ENCODE measurements at regions of chr16 and their contacts with region 1.

Region 1: GRCh38 chr16:30534368-30535105 is at the start of gene ZNF747:
- DNase-seq: peak; percentile 89 to 92 (median 90)
- H3K4me3 ChIP-seq: peak within 1 kb of the TSS; percentile 86 to 92
- H3K4me3 Mint-ChIP-seq: peak within 1 kb of the TSS; percentile 87 to 99 (median 93)
- H3K27ac ChIP-seq: peak within 1 kb of the TSS; percentile 91
- H3K27ac Mint-ChIP-seq: peak within 1 kb of the TSS; percentile 94 to 99 (median 97)
- H3K4me1 ChIP-seq: peaks cover 42% of the 10 kb centered on the region
- H3K4me1 Mint-ChIP-seq: peaks cover 15 to 51% (median 31%) of the 10 kb centered on the region in 4 donors
- H3K27me3 ChIP-seq: no peaks in the 10 kb centered on the region
- H3K27me3 Mint-ChIP-seq: no peaks in the 10 kb centered on the region
- total RNA-seq, gene ZNF747: 15.7 to 17.8 TPM

Region 2: DNA sequence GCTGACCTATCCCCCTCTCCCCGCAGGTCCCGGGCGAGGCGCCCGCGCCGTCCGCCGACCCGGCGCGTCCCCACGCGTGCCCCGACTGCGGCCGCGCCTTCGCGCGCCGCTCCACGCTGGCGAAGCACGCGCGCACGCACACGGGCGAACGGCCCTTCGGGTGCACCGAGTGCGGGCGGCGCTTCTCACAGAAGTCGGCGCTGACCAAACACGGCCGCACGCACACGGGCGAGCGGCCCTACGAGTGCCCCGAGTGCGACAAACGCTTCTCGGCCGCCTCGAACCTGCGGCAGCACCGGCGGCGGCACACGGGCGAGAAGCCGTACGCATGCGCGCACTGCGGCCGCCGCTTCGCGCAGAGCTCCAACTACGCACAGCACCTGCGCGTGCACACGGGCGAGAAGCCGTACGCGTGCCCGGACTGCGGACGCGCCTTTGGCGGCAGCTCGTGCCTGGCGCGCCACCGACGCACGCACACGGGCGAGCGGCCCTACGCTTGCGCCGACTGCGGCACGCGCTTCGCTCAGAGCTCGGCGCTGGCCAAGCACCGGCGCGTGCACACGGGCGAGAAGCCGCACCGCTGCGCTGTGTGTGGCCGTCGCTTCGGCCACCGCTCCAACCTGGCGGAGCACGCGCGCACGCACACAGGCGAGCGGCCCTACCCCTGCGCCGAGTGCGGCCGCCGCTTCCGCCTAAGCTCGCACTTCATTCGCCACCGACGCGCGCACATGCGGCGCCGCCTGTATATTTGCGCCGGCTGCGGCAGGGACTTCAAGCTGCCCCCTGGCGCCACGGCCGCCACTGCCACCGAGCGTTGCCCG is 116.8 kb before region 1 on chr16:
- CTCF ChIA-PET with region 1: no interaction called
- POLR2A ChIA-PET with region 1: interaction called, 25 read pairs
- intact Hi-C with region 1: no loop called
- DNase-seq: peak; percentile 89 to 93 (median 91)
- H3K4me3 ChIP-seq: peak overlapping the region; percentile 12 to 68
- H3K4me3 Mint-ChIP-seq: peak overlapping the region; percentile 39 to 85 (median 68)
- H3K27ac ChIP-seq: peak overlapping the region; percentile 61
- H3K27ac Mint-ChIP-seq: peak overlapping the region in 3 of 7 donors; percentile 41 to 90 (median 74)
- H3K4me1 ChIP-seq: peaks cover 15% of the 10 kb centered on the region
- H3K4me1 Mint-ChIP-seq: peaks cover 6 to 24% (median 13%) of the 10 kb centered on the region in 4 donors
- H3K27me3 ChIP-seq: no peaks in the 10 kb centered on the region
- H3K27me3 Mint-ChIP-seq: no peaks in the 10 kb centered on the region

Region 3: DNA sequence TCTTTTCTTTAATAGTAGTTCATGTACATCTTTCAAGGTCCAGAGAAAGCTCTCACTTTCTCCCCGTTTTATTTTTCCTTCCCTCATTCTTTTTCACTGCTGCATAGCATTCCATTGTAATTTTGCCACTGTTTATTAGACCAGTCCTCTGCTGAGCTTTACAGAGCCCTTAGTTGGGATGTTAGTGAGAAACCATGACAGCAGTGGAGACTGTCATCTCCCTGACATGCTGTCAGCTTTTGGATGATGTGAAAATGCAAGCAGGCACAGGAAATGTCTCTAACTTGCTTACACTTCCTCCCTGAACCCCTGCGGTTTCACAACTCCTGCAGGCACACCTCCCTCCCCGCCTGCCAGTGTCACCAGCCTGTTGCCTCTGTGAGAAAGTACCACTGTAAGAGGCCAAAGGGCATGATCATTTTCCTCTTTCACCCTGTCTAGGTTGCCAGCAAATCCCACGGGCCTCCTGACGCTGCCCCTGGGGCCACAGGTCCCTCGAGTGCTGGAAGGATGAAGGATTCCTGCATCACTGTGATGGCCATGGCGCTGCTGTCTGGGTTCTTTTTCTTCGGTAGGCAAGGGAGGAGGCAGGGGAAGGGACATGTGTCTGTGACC is 62.1 kb before region 1 on chr16 and contains the start of gene ITGAL:
- CTCF ChIA-PET with region 1: interaction called, 9 read pairs
- POLR2A ChIA-PET with region 1: interaction called, 21 read pairs
- intact Hi-C with region 1: loop called (anchors 10 kb)
- DNase-seq: peak; percentile 87 to 97 (median 89)
- H3K4me3 ChIP-seq: peak within 1 kb of the TSS; percentile 77 to 96
- H3K4me3 Mint-ChIP-seq: peak within 1 kb of the TSS; percentile 98 to 99 (median 98)
- H3K27ac ChIP-seq: peak within 1 kb of the TSS; percentile 89
- H3K27ac Mint-ChIP-seq: peak within 1 kb of the TSS; percentile 93 to 97 (median 95)
- H3K4me1 ChIP-seq: peaks cover 67% of the 10 kb centered on the region
- H3K4me1 Mint-ChIP-seq: peaks cover 33 to 75% (median 45%) of the 10 kb centered on the region in 4 donors
- H3K27me3 ChIP-seq: no peaks in the 10 kb centered on the region
- H3K27me3 Mint-ChIP-seq: no peaks in the 10 kb centered on the region
- total RNA-seq, gene ITGAL: 648 to 657 TPM

Region 4: DNA sequence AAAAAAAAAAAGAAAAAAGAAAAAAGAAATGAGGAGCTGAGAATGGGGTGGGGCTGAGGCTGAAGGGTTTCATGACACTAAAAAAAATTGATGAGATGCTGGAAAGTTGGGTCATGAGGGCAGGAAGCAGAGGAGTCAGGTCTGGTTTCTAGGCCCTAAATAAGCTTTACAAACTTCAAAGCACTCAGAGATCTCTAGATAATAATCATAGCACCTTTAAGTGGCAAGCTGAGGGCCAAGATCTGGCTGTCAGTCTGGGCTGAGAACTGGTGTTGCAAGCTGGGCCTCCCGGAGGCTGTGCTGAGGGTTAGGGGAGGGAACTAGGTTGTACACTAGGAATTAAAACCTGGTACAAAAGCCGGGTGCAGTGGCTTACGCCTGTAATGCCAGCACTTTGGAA is 17.2 kb after region 1 on chr16:
- CTCF ChIA-PET with region 1: interaction called, 101 read pairs
- POLR2A ChIA-PET with region 1: interaction called, 457 read pairs
- intact Hi-C with region 1: no loop called
- DNase-seq: peak; percentile 80 to 91 (median 88)
- H3K4me3 ChIP-seq: peak overlapping the region in 1 of 2 donors; percentile 13
- H3K4me3 Mint-ChIP-seq: peak overlapping the region; percentile 76 to 85 (median 80)
- H3K27ac ChIP-seq: peak overlapping the region; percentile 60
- H3K27ac Mint-ChIP-seq: peak overlapping the region; percentile 94 to 98 (median 96)
- H3K4me1 ChIP-seq: peaks cover 66% of the 10 kb centered on the region
- H3K4me1 Mint-ChIP-seq: peaks cover 32 to 63% (median 49%) of the 10 kb centered on the region in 4 donors
- H3K27me3 ChIP-seq: no peaks in the 10 kb centered on the region
- H3K27me3 Mint-ChIP-seq: no peaks in the 10 kb centered on the region

Region 5: GRCh38 chr16:30585400-30586189 is 51.1 kb after region 1 on chr16 and contains the start of gene ZNF785:
- CTCF ChIA-PET with region 1: interaction called, 5 read pairs
- POLR2A ChIA-PET with region 1: interaction called, 31 read pairs
- intact Hi-C with region 1: no loop called
- DNase-seq: peak; percentile 94 to 96 (median 95)
- H3K4me3 ChIP-seq: peak within 1 kb of the TSS; percentile 73 to 97
- H3K4me3 Mint-ChIP-seq: peak within 1 kb of the TSS; percentile 87 to 96 (median 91)
- H3K27ac ChIP-seq: peak within 1 kb of the TSS; percentile 79
- H3K27ac Mint-ChIP-seq: peak within 1 kb of the TSS; percentile 76 to 96 (median 93)
- H3K4me1 ChIP-seq: peaks cover 21% of the 10 kb centered on the region
- H3K4me1 Mint-ChIP-seq: peaks cover 9 to 38% (median 26%) of the 10 kb centered on the region in 4 donors
- H3K27me3 ChIP-seq: no peaks in the 10 kb centered on the region
- H3K27me3 Mint-ChIP-seq: no peaks in the 10 kb centered on the region
- total RNA-seq, gene ZNF785: 33.4 to 34.2 TPM

Region 6: GRCh38 chr16:30628627-30629540 is 94.3 kb after region 1 on chr16:
- CTCF ChIA-PET with region 1: interaction called, 19 read pairs
- POLR2A ChIA-PET with region 1: no interaction called
- intact Hi-C with region 1: no loop called
- DNase-seq: peak; percentile 72 to 83 (median 80)
- H3K4me3 ChIP-seq: peak overlapping the region in 1 of 2 donors; percentile 48
- H3K4me3 Mint-ChIP-seq: peak overlapping the region; percentile 67 to 86 (median 78)
- H3K27ac ChIP-seq: no peak overlapping the region
- H3K27ac Mint-ChIP-seq: peak overlapping the region; percentile 38 to 95 (median 87)
- H3K4me1 ChIP-seq: peaks cover 9% of the 10 kb centered on the region
- H3K4me1 Mint-ChIP-seq: peaks cover 4 to 9% (median 7%) of the 10 kb centered on the region in 4 donors
- H3K27me3 ChIP-seq: no peaks in the 10 kb centered on the region
- H3K27me3 Mint-ChIP-seq: peaks cover 0 to under 1% of the 10 kb centered on the region in 2 donors